ENCODE measurements at regions of chr6 and their contacts with region 1.

Region 1: DNA sequence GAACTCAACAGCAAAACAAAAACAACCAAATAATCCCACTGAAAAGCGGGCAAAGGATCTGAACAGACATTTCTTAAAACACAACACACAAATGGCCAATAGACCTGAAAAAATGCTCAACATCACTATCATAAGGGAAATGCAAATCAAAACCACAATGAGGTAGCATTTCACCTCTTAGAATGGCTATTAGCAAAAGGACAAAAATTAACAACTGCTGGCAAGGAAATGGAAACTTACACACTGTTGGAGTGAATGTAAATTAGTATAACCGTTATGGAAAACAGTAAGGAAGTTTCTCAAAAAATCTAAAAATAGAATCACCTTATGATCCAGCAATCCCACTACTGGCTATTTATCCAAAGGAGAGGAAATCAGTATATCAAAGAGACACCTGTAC is 20.9 kb downstream of the FAM8A1 start:
- DNase-seq: no peak
- ATAC-seq: peak; percentile 31
- H3K4me3 Mint-ChIP-seq: no peak overlapping the region
- H3K27ac Mint-ChIP-seq: peak overlapping the region; percentile 9
- H3K4me1 Mint-ChIP-seq: peaks cover 16% of the 10 kb centered on the region
- H3K27me3 Mint-ChIP-seq: no peaks in the 10 kb centered on the region
- CTCF ChIP-seq: no peak

Region 2: DNA sequence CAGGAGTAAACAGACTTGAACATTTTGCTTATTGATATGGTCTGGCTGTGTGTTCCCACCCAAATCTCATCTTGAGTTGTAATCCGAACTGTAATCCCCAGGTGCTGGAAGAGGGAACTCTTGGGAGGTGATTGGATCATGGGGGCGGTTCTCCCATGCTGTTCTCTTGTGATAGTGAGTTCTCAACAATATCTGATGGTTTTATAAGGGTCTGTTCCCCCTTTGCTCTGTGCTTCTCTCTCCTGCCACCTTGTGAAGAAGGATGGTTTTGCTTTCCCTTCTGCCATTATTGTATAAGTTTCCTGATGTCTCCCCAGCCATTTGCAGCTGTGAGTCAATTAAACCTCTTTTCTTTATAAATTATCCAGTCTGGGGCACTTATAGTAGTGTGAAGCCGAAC is 1452.1 kb before region 1 on chr6:
- CTCF ChIA-PET with region 1: no interaction called
- POLR2A ChIA-PET with region 1: no interaction called
- intact Hi-C with region 1: no loop called
- DNase-seq: no peak
- ATAC-seq: peak; percentile 37
- H3K4me3 Mint-ChIP-seq: no peak overlapping the region
- H3K27ac Mint-ChIP-seq: no peak overlapping the region
- H3K4me1 Mint-ChIP-seq: no peaks in the 10 kb centered on the region
- H3K27me3 Mint-ChIP-seq: peaks cover 7% of the 10 kb centered on the region
- CTCF ChIP-seq: no peak

Region 3: GRCh38 chr6:17666646-17667045 is 45.6 kb after region 1 on chr6:
- CTCF ChIA-PET with region 1: no interaction called
- POLR2A ChIA-PET with region 1: interaction called, 12 read pairs
- intact Hi-C with region 1: no loop called
- DNase-seq: no peak
- ATAC-seq: no peak
- H3K4me3 Mint-ChIP-seq: no peak overlapping the region
- H3K27ac Mint-ChIP-seq: no peak overlapping the region
- H3K4me1 Mint-ChIP-seq: no peaks in the 10 kb centered on the region
- H3K27me3 Mint-ChIP-seq: no peaks in the 10 kb centered on the region
- CTCF ChIP-seq: no peak

Region 4: DNA sequence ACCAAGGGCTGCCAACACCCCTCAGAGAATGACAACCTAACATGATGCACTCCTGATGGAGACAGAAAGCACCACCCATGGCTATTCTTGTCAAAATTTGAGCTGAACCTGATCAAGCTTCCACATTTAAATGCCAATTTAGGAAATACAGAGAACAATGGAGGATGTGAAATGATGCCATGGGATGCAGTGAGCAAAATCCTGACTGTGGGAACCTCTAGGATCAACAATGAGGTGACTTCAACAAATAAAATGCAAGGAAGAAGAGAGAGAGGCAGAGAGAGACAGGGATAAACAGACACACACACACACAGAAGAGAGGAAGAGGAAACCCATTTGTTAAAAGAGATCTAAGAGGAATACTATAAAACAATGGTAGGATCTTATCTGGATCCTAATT is 205.3 kb after region 1 on chr6:
- CTCF ChIA-PET with region 1: no interaction called
- POLR2A ChIA-PET with region 1: no interaction called
- intact Hi-C with region 1: no loop called
- DNase-seq: no peak
- ATAC-seq: no peak
- H3K4me3 Mint-ChIP-seq: no peak overlapping the region
- H3K27ac Mint-ChIP-seq: no peak overlapping the region
- H3K4me1 Mint-ChIP-seq: no peaks in the 10 kb centered on the region
- H3K27me3 Mint-ChIP-seq: no peaks in the 10 kb centered on the region
- CTCF ChIP-seq: no peak

Measured in activated B cell treated with CpG ODN at 0.5 μM for 24 hours (primary cell).